ENCODE measurements at regions of chr1 and their contacts with region 1.

Region 1: DNA sequence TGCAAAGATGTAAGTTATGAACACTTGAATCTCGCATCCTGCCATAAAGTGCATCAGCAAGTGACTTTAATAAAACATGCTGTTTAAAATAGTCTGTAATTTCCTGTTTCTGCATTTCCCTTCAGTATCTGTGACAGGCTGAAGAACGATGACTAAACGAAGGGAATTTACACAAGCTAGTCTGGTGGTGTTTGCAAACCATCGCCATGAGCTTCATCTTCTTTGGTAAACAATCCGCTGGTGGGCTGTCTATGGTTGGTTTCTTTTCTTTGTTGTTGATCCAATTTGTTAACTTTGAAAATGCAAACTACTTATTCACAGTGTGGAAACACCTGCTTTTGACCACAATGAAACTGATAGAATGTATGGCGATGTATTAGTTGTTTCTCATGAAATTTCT is 13.9 kb downstream of the SERTAD4 start:
- DNase-seq: no peak
- H3K4me3 ChIP-seq: no peak overlapping the region
- CTCF ChIP-seq: no peak

Region 2: GRCh38 chr1:210280221-210280620 is 33.8 kb after region 1 on chr1:
- in situ Hi-C with region 1: loop called (anchors 5 kb)
- DNase-seq: no peak
- H3K4me3 ChIP-seq: no peak overlapping the region
- CTCF ChIP-seq: no peak

Measured in astrocyte of the cerebellum (primary cell).